Activated CD4-positive, alpha-beta T cell treated with anti-CD3 and anti-CD28 coated beads, Interleukin-2, amount 10 ng/mL, durations not matched to agents 24 days and 14 days (primary cell): ENCODE measurements at regions of chr5 and their contacts with region 1.

Region 1: GRCh38 chr5:94524841-94525697 is 93.3 kb downstream of the KIAA0825 start:
- DNase-seq: peak; percentile 78
- H3K4me3 Mint-ChIP-seq: no peak overlapping the region
- H3K27ac Mint-ChIP-seq: no peak overlapping the region
- H3K4me1 Mint-ChIP-seq: no peaks in the 10 kb centered on the region
- H3K27me3 Mint-ChIP-seq: no peaks in the 10 kb centered on the region

Region 2: DNA sequence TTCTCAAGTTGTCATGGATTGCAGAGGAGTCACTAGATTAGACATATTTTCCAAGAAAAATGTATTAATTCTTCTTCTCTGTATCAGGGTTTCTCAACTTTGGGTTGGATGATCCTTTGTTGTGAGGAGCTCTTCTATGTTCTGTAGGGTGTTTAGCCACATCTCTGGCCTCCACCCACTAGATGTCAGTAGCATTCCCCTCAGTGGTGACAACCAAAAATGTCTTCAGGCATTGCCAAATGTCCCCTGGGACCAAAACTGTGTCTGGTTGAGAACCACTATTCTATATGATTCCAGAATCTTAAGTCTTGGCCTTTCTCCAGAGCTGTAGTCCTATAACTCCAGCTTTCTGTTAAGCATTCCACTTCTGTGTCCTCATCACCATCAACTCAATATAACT is 127.6 kb before region 1 on chr5:
- intact Hi-C with region 1: no loop called
- DNase-seq: no peak
- H3K4me3 Mint-ChIP-seq: no peak overlapping the region
- H3K27ac Mint-ChIP-seq: no peak overlapping the region
- H3K4me1 Mint-ChIP-seq: no peaks in the 10 kb centered on the region
- H3K27me3 Mint-ChIP-seq: peaks cover 4% of the 10 kb centered on the region

Region 3: GRCh38 chr5:94693043-94693822 is 168.2 kb after region 1 on chr5:
- intact Hi-C with region 1: loop called (anchors 1 kb)
- DNase-seq: no peak
- H3K4me3 Mint-ChIP-seq: no peak overlapping the region
- H3K27ac Mint-ChIP-seq: no peak overlapping the region
- H3K4me1 Mint-ChIP-seq: peaks cover 4% of the 10 kb centered on the region
- H3K27me3 Mint-ChIP-seq: no peaks in the 10 kb centered on the region

Region 4: DNA sequence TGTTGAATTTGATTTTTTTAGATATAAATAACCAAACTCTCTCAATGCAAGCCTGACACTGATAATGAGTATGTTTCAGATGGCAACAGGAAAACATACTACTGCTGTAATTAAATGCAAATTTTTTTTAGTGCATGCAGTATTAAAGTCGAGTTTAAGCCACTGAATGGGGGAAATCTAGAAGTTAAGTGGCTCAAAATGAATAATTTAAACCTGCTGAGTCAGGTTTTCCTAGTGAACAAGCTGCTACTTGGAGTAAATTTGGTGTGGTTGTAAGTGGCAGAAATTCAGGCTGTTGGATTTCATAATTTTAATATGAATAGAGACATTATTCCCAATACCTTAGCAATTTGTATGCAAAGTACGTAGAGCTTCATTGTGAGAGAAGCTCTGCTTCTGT is 215.2 kb after region 1 on chr5:
- intact Hi-C with region 1: loop called (anchors 1 kb)
- DNase-seq: no peak
- H3K4me3 Mint-ChIP-seq: no peak overlapping the region
- H3K27ac Mint-ChIP-seq: no peak overlapping the region
- H3K4me1 Mint-ChIP-seq: peaks cover 2% of the 10 kb centered on the region
- H3K27me3 Mint-ChIP-seq: peaks cover 2% of the 10 kb centered on the region